ENCODE measurements at regions of chr11 and their contacts with region 1.

Region 1: GRCh38 chr11:27228232-27228905 is 134.6 kb downstream of the CCDC34 start:
- DNase-seq: no peak
- H3K4me3 ChIP-seq: no peak overlapping the region
- H3K27ac ChIP-seq: no peak overlapping the region
- H3K27me3 ChIP-seq: no peaks in the 10 kb centered on the region
- CTCF ChIP-seq: no peak

Region 2: DNA sequence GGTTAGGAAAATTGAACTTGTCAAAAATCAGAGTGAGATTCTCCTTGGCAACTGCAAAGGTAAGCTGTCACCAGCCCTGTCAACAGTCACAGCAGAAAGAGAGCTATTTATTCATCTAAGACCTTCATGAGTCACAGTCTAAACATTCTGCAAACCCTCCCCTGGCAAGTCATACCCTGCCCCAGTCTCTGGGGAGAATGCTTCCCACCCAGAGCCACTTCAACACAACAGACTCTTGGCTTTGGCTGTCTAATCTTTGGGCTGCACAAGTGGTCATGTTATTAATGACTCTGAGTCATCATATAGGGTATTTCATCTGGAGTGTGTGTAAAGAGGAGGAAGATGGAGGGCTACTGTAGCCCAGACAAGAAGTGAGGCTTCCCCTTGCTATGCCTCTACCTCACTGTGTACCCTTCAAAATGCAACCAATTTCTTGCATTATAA is 18.8 kb before region 1 on chr11:
- CTCF ChIA-PET with region 1: no interaction called
- POLR2A ChIA-PET with region 1: no interaction called
- DNase-seq: no peak
- H3K4me3 ChIP-seq: no peak overlapping the region
- H3K27ac ChIP-seq: no peak overlapping the region
- H3K27me3 ChIP-seq: no peaks in the 10 kb centered on the region
- CTCF ChIP-seq: no peak

Region 3: GRCh38 chr11:27239305-27239942 is 11.1 kb after region 1 on chr11:
- CTCF ChIA-PET with region 1: interaction called, 15 read pairs
- POLR2A ChIA-PET with region 1: no interaction called
- DNase-seq: no peak
- H3K4me3 ChIP-seq: no peak overlapping the region
- H3K27ac ChIP-seq: no peak overlapping the region
- H3K27me3 ChIP-seq: no peaks in the 10 kb centered on the region
- CTCF ChIP-seq: no peak

Measured in AG04450 (cell line).